ENCODE measurements at regions of chr14 and their contacts with region 1.

Region 1: GRCh38 chr14:31084385-31084784 is 58.2 kb upstream of the STRN3 start:
- DNase-seq: no peak
- H3K4me3 ChIP-seq: no peak overlapping the region
- H3K27ac ChIP-seq: no peak overlapping the region
- H3K4me1 ChIP-seq: peaks cover 2% of the 10 kb centered on the region
- H3K27me3 ChIP-seq: no peaks in the 10 kb centered on the region
- CTCF ChIP-seq: no peak
- POLR2A ChIP-seq: no peak

Region 2: GRCh38 chr14:30656190-30656632 is 428.2 kb before region 1 on chr14:
- intact Hi-C with region 1: loop called (anchors 5 kb)
- DNase-seq: peak; percentile 7
- H3K4me3 ChIP-seq: no peak overlapping the region
- H3K27ac ChIP-seq: no peak overlapping the region
- H3K4me1 ChIP-seq: no peaks in the 10 kb centered on the region
- H3K27me3 ChIP-seq: no peaks in the 10 kb centered on the region
- CTCF ChIP-seq: peak; percentile 21 to 59 (median 56)
- POLR2A ChIP-seq: no peak

Region 3: DNA sequence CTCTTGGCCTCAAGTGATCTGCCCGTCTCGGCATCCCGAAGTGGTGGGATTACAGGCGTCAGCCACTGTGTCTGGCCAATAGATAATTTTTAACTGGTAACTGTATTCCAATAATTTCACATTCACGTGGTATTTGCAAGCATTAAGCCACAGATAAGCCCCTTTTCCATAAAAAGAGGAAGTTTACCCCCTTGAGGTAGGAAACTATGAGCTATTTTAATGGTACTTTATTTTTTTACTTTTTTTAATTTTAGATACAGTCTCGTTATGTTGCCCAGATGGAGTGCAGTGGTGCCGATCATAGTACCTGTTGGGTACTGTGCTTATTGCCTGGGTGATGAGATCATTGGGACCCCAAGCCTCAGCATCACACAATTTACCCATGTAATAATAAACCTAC is 101.9 kb before region 1 on chr14:
- intact Hi-C with region 1: loop called (anchors 5 kb)
- DNase-seq: no peak
- H3K4me3 ChIP-seq: no peak overlapping the region
- H3K27ac ChIP-seq: no peak overlapping the region
- H3K4me1 ChIP-seq: no peaks in the 10 kb centered on the region
- H3K27me3 ChIP-seq: no peaks in the 10 kb centered on the region
- CTCF ChIP-seq: no peak
- POLR2A ChIP-seq: no peak